GM12878 (cell line): ENCODE measurements at regions of chr14 and their contacts with region 1.

Region 1: DNA sequence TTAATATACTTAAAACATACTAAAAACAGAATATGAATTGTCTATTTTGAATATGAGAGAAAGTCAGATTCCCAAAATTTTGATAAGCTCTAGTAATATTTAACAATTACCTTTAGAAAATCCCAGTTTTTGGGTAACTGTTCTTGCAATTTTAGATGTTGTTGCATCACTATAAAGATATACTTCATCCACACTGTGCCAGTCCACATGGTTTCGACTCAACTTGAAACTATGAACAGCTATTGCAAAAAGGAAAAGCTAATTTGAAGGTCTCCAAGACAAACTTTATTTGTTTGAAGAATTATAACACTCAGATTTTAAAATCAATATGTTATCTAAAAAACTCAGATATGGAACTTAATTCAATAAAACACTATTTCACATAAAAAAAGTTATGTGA is 59.9 kb downstream of the DDHD1 start:
- DNase-seq: no peak
- ATAC-seq: no peak
- H3K4me3 ChIP-seq: no peak overlapping the region
- H3K27ac ChIP-seq: no peak overlapping the region
- H3K4me1 ChIP-seq: no peaks in the 10 kb centered on the region
- H3K27me3 ChIP-seq: no peaks in the 10 kb centered on the region
- CTCF ChIP-seq: no peak
- EP300 ChIP-seq: no peak
- POLR2A ChIP-seq: no peak
- RAD21 ChIP-seq: no peak

Region 2: GRCh38 chr14:53103636-53104305 is 10.6 kb after region 1 on chr14:
- CTCF ChIA-PET with region 1: interaction called, 6 read pairs
- POLR2A ChIA-PET with region 1: interaction called, 4 read pairs
- RAD21 ChIA-PET with region 1: interaction called, 17 read pairs
- SMC1A ChIA-PET with region 1: interaction called, 42 read pairs
- in situ Hi-C with region 1: no loop called
- intact Hi-C with region 1: no loop called
- DNase-seq: no peak
- ATAC-seq: no peak
- H3K4me3 ChIP-seq: no peak overlapping the region
- H3K27ac ChIP-seq: no peak overlapping the region
- H3K4me1 ChIP-seq: peaks cover 10% of the 10 kb centered on the region; the same call in 1 of the 2 replicates
- H3K27me3 ChIP-seq: no peaks in the 10 kb centered on the region
- CTCF ChIP-seq: no peak
- EP300 ChIP-seq: no peak
- POLR2A ChIP-seq: no peak
- RAD21 ChIP-seq: no peak